Lower leg skin (tissue), 4 donors: ENCODE measurements at regions of chr6 and their contacts with region 1.

Region 1: GRCh38 chr6:3751730-3752542 is 423 bp upstream of the PXDC1 start:
- DNase-seq: peak; percentile 89 to 98
- H3K4me3 ChIP-seq: peak overlapping the region; percentile 87
- CTCF ChIP-seq: no peak
- POLR2A ChIP-seq: peak in 1 of 2 donors; percentile 29

Region 2: GRCh38 chr6:3825851-3826581 is 74.1 kb after region 1 on chr6:
- intact Hi-C with region 1: loop called (anchors 10 kb)
- DNase-seq: peak; percentile 86 to 97
- H3K4me3 ChIP-seq: no peak overlapping the region
- CTCF ChIP-seq: no peak
- POLR2A ChIP-seq: no peak